Mammary epithelial cell (primary cell): ENCODE measurements at regions of chr21 and their contacts with region 1.

Region 1: GRCh38 chr21:14737922-14738321 is 191.8 kb upstream of the SAMSN1 start:
- DNase-seq: peak; percentile 44
- H3K4me3 ChIP-seq: no peak overlapping the region
- H3K27ac ChIP-seq: no peak overlapping the region
- H3K4me1 ChIP-seq: peaks cover 10% of the 10 kb centered on the region
- H3K27me3 ChIP-seq: no peaks in the 10 kb centered on the region
- CTCF ChIP-seq: peak; percentile 74 to 75

Region 2: DNA sequence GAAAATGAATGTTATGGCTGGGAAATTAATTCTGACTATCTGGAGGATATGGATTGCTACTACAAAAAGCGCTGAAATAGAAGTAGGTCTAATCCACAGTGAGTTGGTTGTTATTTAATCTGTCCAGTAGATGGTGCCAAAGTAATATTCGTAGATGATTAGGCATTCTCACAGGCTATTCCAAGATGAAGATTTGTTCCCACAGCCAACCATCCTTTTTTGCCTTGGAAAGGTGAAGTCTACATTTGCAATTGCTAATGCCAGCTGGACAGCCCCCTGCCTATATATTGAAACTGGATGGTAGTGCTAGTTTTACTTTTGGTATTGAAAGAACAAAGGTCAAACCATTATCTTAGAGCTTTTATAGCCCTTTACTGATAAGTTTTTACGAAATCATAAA is 478.2 kb before region 1 on chr21:
- CTCF ChIA-PET with region 1: no interaction called
- dilution Hi-C with region 1: no loop called
- in situ Hi-C with region 1: no loop called
- intact Hi-C with region 1: loop called (anchors 10 kb)
- DNase-seq: peak; percentile 43
- H3K4me3 ChIP-seq: no peak overlapping the region
- H3K27ac ChIP-seq: no peak overlapping the region
- H3K4me1 ChIP-seq: no peaks in the 10 kb centered on the region
- H3K27me3 ChIP-seq: no peaks in the 10 kb centered on the region
- CTCF ChIP-seq: peak; percentile 38 to 59

Region 3: DNA sequence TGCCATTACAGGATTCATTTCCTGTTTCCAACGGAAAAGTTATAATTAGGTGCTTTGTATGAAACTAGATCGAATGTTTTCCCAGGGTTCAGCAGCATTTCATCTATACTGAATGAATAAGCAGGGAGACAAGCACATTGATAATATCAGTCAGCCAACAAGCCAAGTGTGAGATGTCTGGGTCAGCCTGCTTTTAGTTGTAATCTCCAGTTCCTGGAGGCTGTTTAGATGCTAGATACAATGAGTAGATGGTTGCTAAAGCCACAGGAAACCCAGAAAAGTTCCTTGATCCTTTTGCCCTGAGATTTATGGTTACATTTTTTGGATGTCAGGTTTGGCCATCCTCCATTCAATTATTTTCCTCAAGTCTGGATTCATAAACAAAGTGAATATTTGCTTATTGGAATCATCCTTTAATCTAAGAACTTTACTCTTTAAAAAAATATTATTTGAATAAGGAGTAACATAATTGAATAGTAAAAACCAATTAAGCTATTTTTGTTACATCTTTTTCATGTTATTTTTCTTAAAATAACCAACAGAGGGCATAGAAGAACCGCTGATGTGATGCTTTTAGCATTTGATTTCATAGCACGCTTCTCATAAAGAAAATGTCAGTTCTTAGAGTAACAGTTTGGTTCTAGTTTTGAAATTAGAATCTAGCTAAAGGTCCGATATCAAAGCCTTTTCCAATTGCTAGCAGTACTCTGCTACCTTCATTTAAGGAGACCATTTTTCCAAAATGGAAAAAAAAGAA is 431.6 kb before region 1 on chr21:
- CTCF ChIA-PET with region 1: interaction called, 5 read pairs
- dilution Hi-C with region 1: no loop called
- in situ Hi-C with region 1: no loop called
- intact Hi-C with region 1: loop called (anchors 1 kb)
- DNase-seq: no peak
- H3K4me3 ChIP-seq: no peak overlapping the region
- H3K27ac ChIP-seq: no peak overlapping the region
- H3K4me1 ChIP-seq: no peaks in the 10 kb centered on the region
- H3K27me3 ChIP-seq: peaks cover 2% of the 10 kb centered on the region
- CTCF ChIP-seq: peak; percentile 6 to 48

Region 4: DNA sequence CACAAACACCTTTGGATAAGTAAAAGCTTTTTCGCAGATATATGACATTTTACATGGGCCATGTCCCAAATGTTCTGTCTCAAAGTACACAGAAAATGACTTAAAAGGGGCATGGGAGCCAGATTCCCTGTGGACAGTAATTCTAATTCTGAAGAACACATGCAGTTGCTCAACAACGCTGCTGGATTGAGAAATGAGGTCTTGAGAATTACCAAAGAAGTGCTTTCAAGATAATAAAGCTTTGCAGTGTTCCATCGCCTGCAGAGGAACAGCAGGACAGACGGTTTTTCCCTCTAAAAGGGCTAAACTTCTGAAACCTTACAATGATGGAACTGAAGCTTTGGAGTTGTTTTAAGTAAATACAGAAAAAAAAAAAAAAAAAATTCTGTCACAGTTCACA is 299.7 kb before region 1 on chr21:
- CTCF ChIA-PET with region 1: no interaction called
- dilution Hi-C with region 1: no loop called
- in situ Hi-C with region 1: loop called in 1 of 2 experiments (anchors 25 kb)
- intact Hi-C with region 1: no loop called
- DNase-seq: no peak
- H3K4me3 ChIP-seq: no peak overlapping the region
- H3K27ac ChIP-seq: no peak overlapping the region
- H3K4me1 ChIP-seq: no peaks in the 10 kb centered on the region
- H3K27me3 ChIP-seq: peaks cover 2% of the 10 kb centered on the region
- CTCF ChIP-seq: no peak

Region 5: DNA sequence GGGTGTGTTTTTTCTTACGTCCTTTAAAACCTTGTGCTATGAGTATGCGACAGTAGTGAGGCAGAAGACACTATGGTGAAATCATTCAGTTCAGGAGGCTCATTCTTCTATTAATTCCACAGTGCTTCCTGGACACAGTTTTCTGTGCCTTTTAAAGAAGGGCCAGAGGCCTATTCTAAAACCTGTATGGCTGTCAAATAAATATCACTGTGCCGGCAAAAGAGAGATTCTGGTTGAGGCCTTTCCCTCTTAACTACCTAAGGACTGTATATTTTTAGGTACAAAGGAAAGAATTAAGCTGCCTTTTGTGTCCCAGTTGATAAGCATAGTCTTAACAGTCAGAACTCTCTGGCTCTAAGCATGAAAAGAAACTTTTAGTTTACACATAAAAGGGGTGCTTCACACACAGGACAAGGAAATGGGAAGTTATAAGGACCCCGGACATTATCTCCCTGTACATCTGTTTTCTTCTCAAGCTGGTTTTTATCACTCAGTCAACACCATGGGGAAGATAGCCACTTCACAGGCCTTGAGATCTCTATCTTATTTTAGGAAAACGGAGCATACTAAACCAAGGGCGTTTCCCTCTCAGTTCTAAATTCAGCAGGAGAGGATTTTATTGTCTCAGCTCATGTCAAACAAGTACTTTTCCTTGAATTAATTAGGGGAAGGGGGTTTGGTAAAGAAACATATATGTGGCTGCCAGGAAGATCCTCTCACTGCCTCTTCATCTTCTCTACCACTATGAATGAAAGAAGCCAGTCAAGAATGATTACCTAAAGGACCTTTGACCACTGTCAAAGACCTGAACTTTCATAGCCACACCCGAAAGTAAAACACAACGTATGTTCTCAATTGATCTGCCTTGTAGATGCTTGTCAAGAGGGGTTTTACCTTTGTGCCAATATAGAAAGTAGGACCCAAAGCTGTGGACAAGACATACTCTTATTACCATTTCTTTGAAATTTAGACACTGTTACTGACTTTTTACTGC is 283.6 kb before region 1 on chr21:
- CTCF ChIA-PET with region 1: no interaction called
- dilution Hi-C with region 1: no loop called
- in situ Hi-C with region 1: loop called in 1 of 2 experiments (anchors 25 kb)
- intact Hi-C with region 1: loop called (anchors 5 kb)
- DNase-seq: no peak
- H3K4me3 ChIP-seq: no peak overlapping the region
- H3K27ac ChIP-seq: no peak overlapping the region
- H3K4me1 ChIP-seq: no peaks in the 10 kb centered on the region
- H3K27me3 ChIP-seq: peaks cover 4% of the 10 kb centered on the region
- CTCF ChIP-seq: no peak